ENCODE measurements at regions of chr16 and their contacts with region 1.

Region 1: GRCh38 chr16:81481207-81481821 is 36.7 kb downstream of the CMIP start:
- DNase-seq: peak; percentile 97
- ATAC-seq: peak; percentile 87
- H3K4me3 ChIP-seq: peak overlapping the region; percentile 39; the same call in 1 of the 2 replicates
- H3K27ac ChIP-seq: peak overlapping the region; percentile 92
- H3K4me1 ChIP-seq: peaks cover 60% of the 10 kb centered on the region
- H3K27me3 ChIP-seq: no peaks in the 10 kb centered on the region
- CTCF ChIP-seq: peak; percentile 14 to 27 (median 26); a peak in 3 of 6 replicates
- EP300 ChIP-seq: peak; percentile 96 to 98
- POLR2A ChIP-seq: peak; percentile 84
- RAD21 ChIP-seq: peak; percentile 52

Region 2: DNA sequence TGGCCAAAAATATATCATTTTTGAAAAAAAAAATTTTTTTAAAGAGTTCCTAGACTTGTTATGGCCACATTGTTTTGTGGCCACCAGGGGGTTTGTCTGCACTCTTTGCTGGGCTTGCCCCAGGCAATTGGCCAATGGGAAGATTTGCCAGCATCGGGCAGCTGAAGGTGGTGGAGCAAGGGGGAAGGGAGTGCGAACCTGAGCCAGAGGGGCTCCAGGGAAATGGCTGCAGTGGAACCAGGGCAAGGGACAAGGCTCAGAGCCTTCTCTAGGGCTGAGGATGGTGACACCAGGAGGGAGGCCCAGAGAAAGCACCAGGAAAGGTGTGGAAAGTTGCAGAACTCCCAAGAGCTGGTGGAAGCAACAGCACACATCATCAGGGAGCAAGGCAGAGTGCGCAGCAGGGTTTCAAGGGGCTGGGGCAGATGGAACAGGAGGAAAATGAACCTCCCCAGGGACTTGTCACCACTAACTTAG is 52.2 kb before region 1 on chr16:
- CTCF ChIA-PET with region 1: interaction called, 7 read pairs
- POLR2A ChIA-PET with region 1: interaction called, 4 read pairs
- RAD21 ChIA-PET with region 1: interaction called, 16 read pairs
- SMC1A ChIA-PET with region 1: interaction called, 25 read pairs
- in situ Hi-C with region 1: no loop called
- intact Hi-C with region 1: loop called (anchors 1 kb)
- DNase-seq: no peak
- ATAC-seq: peak; percentile 59
- H3K4me3 ChIP-seq: no peak overlapping the region
- H3K27ac ChIP-seq: no peak overlapping the region
- H3K4me1 ChIP-seq: peaks cover 27% of the 10 kb centered on the region
- H3K27me3 ChIP-seq: no peaks in the 10 kb centered on the region
- CTCF ChIP-seq: peak; percentile 35 to 47 (median 43); a peak in 5 of 6 replicates
- EP300 ChIP-seq: no peak
- POLR2A ChIP-seq: no peak
- RAD21 ChIP-seq: peak; percentile 61

Region 3: GRCh38 chr16:81451753-81452680 is 29.3 kb before region 1 on chr16:
- CTCF ChIA-PET with region 1: interaction called, 17 read pairs
- POLR2A ChIA-PET with region 1: interaction called, 12 read pairs
- RAD21 ChIA-PET with region 1: interaction called, 19 read pairs
- SMC1A ChIA-PET with region 1: interaction called, 18 read pairs
- in situ Hi-C with region 1: no loop called
- intact Hi-C with region 1: no loop called
- DNase-seq: no peak
- ATAC-seq: no peak
- H3K4me3 ChIP-seq: peak overlapping the region; percentile 23; the same call in 1 of the 2 replicates
- H3K27ac ChIP-seq: peak overlapping the region; percentile 35; the same call in 1 of the 2 replicates
- H3K4me1 ChIP-seq: peaks cover 16% of the 10 kb centered on the region
- H3K27me3 ChIP-seq: no peaks in the 10 kb centered on the region
- CTCF ChIP-seq: no peak
- EP300 ChIP-seq: no peak
- POLR2A ChIP-seq: no peak
- RAD21 ChIP-seq: no peak

Region 4: DNA sequence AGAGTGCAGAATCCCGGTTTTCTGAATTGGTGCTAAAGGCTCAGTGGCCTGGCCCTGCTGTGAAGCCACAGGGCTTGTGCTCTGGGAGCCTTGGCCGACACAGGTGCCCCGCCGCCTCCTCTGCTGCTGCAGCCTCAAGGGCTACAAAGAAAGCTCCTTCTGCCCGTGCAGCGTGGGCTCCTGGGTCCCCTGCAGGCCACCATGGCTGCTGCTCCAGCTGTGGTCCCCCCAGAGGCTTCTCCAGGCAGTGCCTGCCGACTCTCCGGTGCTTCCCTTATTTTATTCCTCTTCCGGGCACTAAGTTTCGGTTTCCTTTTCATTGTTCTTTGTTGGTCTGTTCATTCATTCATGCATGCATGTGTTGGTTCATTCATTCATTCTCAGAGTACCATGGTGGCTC is 16.4 kb after region 1 on chr16:
- CTCF ChIA-PET with region 1: interaction called, 7 read pairs
- POLR2A ChIA-PET with region 1: interaction called, 7 read pairs
- RAD21 ChIA-PET with region 1: interaction called, 4 read pairs
- SMC1A ChIA-PET with region 1: interaction called, 19 read pairs
- in situ Hi-C with region 1: no loop called
- intact Hi-C with region 1: no loop called
- DNase-seq: no peak
- ATAC-seq: peak; percentile 78
- H3K4me3 ChIP-seq: no peak overlapping the region
- H3K27ac ChIP-seq: peak overlapping the region; percentile 39
- H3K4me1 ChIP-seq: peaks cover 14% of the 10 kb centered on the region
- H3K27me3 ChIP-seq: no peaks in the 10 kb centered on the region
- CTCF ChIP-seq: peak in 2 of 3 experiments; percentile 12 to 22; a peak in 1 of 6 replicates
- EP300 ChIP-seq: no peak
- POLR2A ChIP-seq: no peak
- RAD21 ChIP-seq: no peak

Region 5: DNA sequence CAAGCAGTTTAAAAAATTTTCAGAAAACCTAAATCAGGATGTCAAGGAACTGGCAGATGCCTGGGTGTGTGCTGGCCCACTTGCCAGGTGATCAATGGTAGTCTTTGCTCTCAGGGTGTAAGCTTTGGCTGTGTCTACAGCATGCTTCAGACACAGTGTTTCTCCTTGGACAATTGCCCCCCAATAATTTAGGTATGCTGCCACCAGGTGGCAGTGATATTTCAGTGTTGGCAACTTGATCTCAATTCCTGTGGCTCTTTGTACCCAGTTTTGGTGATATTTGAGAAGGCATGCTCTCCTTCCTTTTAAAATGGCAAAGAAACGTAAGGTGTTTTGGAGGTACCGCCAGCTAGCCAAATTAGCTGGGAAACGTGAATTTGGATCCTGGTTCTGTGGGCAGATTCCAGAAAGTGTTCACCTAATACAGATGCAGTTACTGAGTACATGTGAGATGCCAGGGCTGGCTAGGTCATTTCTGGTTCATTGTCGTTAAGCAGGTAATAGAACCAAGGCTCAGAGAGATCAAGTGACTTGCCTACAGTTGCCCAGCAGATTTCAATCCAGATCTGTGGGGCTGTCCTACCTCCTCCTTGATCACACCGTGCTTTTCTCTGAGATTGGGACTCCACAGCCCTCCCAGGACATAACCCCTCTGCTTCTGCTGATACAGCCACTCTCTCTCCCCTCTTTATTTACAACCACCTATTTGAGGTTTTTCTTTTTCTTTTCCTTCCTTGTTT is 142.2 kb after region 1 on chr16:
- CTCF ChIA-PET with region 1: interaction called, 6 read pairs
- POLR2A ChIA-PET with region 1: no interaction called
- RAD21 ChIA-PET with region 1: interaction called, 4 read pairs
- SMC1A ChIA-PET with region 1: interaction called, 15 read pairs
- in situ Hi-C with region 1: no loop called
- intact Hi-C with region 1: no loop called
- DNase-seq: peak; percentile 37
- ATAC-seq: peak; percentile 76
- H3K4me3 ChIP-seq: no peak overlapping the region
- H3K27ac ChIP-seq: no peak overlapping the region
- H3K4me1 ChIP-seq: peaks cover 10% of the 10 kb centered on the region
- H3K27me3 ChIP-seq: no peaks in the 10 kb centered on the region
- CTCF ChIP-seq: peak; percentile 62 to 84 (median 68); a peak in 5 of 6 replicates
- EP300 ChIP-seq: no peak
- POLR2A ChIP-seq: no peak
- RAD21 ChIP-seq: peak; percentile 87

Region 6: GRCh38 chr16:81817789-81818567 is 336.7 kb after region 1 on chr16:
- CTCF ChIA-PET with region 1: no interaction called
- POLR2A ChIA-PET with region 1: interaction called, 3 read pairs
- RAD21 ChIA-PET with region 1: interaction called, 4 read pairs
- SMC1A ChIA-PET with region 1: interaction called, 3 read pairs
- in situ Hi-C with region 1: no loop called
- intact Hi-C with region 1: loop called (anchors 10 kb)
- DNase-seq: peak; percentile 79
- ATAC-seq: peak; percentile 68
- H3K4me3 ChIP-seq: peak overlapping the region; percentile 38; the same call in 1 of the 2 replicates
- H3K27ac ChIP-seq: peak overlapping the region; percentile 98
- H3K4me1 ChIP-seq: peaks cover 85% of the 10 kb centered on the region
- H3K27me3 ChIP-seq: no peaks in the 10 kb centered on the region
- CTCF ChIP-seq: no peak
- EP300 ChIP-seq: peak; percentile 18 to 79; a peak in 3 of 4 replicates
- POLR2A ChIP-seq: peak; percentile 58
- RAD21 ChIP-seq: no peak; the same call in 1 of the 2 replicates